ENCODE measurements at regions of chr9 and their contacts with region 1.

Region 1: GRCh38 chr9:36190388-36191287 is at the start of gene CLTA:
- DNase-seq: peak; percentile 91
- H3K4me3 ChIP-seq: peak within 1 kb of the TSS; percentile 68
- CTCF ChIP-seq: peak; percentile 33

Region 2: DNA sequence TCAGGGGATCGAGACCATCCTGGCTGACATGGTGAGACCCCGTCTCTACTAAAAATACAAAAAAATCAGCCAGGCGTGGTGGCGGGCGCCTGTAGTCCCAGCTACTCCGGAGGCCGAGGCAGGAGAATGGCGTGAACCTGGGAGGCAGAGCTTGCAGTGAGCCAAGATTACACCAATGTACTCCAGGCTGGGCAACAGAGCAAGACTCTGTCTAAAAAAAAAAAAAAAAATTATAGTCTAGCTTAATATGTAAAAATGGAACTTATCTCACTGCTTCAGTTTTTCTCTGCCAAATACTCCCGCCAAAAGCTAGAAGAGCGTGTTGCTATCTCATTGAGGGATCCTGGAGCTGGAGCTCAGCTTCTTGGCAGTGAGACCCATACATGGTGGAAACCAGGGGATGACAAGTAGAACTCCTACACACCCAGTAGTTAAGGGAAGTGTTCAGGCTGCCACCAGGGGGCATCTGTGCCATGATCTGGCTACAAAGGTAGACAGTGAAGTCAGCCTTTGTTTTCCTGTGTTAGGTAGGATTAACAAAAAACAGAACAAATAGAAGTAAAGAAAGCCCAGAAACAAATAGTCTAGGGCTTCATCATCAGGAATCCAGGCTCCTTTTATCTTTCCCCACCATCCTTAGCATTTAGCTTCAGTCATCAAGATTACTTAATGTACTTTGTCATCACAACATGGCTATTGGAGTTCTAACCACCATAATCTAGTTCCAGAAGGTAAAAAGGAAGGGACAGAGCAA is 87.7 kb before region 1 on chr9:
- CTCF ChIA-PET with region 1: interaction called, 5 read pairs
- POLR2A ChIA-PET with region 1: interaction called, 12 read pairs
- DNase-seq: no peak
- H3K4me3 ChIP-seq: no peak overlapping the region
- CTCF ChIP-seq: peak; percentile 43

Region 3: DNA sequence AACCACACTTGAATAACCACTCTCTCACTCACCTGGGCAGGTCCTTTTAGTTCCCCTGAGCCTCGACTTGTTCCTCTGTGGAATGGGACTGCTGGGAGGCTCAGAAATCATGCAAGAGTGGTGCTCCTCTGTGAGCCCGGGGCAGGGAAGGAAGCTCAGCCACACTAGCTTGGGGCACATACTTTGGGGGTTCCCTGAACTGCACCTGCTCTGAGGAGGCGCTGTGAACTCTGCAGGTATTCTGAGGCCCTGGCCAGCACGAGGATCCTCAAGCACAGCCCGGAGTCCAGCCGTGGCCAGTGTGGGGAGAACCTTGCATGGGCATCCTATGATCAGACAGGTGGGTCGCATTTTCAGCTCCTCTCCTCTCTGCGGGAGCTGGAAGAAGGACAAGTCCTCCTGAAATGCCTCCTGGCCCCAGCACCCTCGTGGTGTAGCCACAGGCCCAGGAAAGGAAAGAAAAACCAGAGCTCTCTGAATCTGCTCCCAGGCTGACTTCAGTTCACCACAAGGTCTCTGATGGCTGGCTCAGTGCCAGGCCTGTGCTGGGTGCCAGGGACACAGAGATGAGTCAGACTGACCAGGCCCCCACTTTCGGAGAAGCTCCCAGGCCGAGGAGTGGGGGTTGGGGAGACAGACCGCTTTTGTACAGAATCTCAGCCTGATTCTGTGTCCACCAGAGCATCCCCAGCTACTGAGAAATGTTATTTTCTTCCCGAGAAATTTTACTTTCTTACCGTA is 42.2 kb before region 1 on chr9:
- CTCF ChIA-PET with region 1: interaction called, 19 read pairs
- POLR2A ChIA-PET with region 1: interaction called, 8 read pairs
- DNase-seq: peak; percentile 77
- H3K4me3 ChIP-seq: no peak overlapping the region; the same call in 1 of the 2 replicates
- CTCF ChIP-seq: no peak

Region 4: DNA sequence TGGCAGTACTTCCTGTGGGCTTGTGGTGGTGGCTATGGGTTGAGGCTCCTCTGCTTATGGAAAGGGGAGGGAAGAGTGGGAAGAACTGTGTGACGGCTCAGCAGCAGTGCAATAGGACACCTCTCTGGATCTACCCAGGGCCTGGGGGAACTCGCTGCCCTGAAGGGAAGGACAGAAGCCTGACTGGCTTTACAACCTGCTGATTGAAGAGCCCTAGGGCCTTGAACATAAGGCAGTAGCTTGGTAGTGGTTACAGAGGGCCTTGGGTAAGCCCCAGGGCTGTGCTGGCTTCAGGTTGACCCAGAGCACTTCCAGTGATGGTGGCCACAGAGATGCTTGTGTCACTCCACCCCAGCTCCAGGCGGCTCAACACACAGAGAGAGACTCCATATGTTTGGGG is 15.9 kb before region 1 on chr9:
- CTCF ChIA-PET with region 1: interaction called, 18 read pairs
- POLR2A ChIA-PET with region 1: interaction called, 3 read pairs
- DNase-seq: no peak
- H3K4me3 ChIP-seq: no peak overlapping the region
- CTCF ChIP-seq: no peak

Region 5: DNA sequence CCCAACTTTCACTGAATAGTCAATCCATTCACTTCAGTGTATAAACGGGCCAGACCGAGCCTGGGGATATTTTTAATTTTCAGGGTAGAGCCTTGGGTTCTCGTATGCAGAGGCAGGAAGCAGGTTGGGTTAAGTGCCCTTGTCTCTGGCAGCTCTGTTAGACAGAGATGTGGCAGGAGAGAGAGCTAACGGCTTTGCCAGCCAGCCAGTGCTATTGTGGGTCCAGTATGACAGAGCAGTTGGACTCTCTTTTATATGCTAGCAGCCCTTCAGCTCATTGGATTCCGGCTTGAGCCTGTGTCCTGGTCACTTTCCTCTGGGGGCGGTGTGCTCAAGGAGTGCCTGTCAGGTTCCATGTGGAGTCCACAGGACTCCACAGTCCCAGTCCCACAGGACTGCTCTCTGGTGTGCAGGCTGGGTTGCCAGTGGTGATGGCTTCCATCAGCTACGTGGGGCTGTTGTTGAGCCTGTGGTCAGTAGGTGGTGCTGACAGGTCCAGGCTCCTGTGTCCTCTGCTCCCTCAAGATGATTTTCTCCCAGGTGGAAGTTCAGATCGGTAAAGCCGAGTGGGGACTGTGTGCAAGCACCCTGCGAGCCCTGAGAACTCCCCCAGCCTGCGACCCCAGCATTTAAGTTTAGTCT is 14.4 kb after region 1 on chr9:
- CTCF ChIA-PET with region 1: interaction called, 35 read pairs
- POLR2A ChIA-PET with region 1: interaction called, 8 read pairs
- DNase-seq: no peak
- H3K4me3 ChIP-seq: no peak overlapping the region
- CTCF ChIP-seq: peak; percentile 14

Region 6: GRCh38 chr9:36222449-36222848 is 31.8 kb after region 1 on chr9:
- CTCF ChIA-PET with region 1: no interaction called
- POLR2A ChIA-PET with region 1: no interaction called
- DNase-seq: no peak
- H3K4me3 ChIP-seq: no peak overlapping the region
- CTCF ChIP-seq: no peak

Measured in AG04449 (cell line).